ENCODE measurements at regions of chr16 and their contacts with region 1.

Region 1: GRCh38 chr16:84116720-84117493 is at the start of gene MBTPS1:
- DNase-seq: peak; percentile 91 to 99 (median 97)
- H3K4me3 ChIP-seq: peak within 1 kb of the TSS; percentile 56 to 100 (median 95)
- H3K27ac ChIP-seq: peak within 1 kb of the TSS; percentile 30 to 98 (median 92)
- H3K27me3 ChIP-seq: no peaks in the 10 kb centered on the region
- CTCF ChIP-seq: peak in 39 of 56 donors; percentile 2 to 80 (median 34)
- total RNA-seq, gene MBTPS1: 70.0 to 125 (median 95.6) TPM

Region 2: DNA sequence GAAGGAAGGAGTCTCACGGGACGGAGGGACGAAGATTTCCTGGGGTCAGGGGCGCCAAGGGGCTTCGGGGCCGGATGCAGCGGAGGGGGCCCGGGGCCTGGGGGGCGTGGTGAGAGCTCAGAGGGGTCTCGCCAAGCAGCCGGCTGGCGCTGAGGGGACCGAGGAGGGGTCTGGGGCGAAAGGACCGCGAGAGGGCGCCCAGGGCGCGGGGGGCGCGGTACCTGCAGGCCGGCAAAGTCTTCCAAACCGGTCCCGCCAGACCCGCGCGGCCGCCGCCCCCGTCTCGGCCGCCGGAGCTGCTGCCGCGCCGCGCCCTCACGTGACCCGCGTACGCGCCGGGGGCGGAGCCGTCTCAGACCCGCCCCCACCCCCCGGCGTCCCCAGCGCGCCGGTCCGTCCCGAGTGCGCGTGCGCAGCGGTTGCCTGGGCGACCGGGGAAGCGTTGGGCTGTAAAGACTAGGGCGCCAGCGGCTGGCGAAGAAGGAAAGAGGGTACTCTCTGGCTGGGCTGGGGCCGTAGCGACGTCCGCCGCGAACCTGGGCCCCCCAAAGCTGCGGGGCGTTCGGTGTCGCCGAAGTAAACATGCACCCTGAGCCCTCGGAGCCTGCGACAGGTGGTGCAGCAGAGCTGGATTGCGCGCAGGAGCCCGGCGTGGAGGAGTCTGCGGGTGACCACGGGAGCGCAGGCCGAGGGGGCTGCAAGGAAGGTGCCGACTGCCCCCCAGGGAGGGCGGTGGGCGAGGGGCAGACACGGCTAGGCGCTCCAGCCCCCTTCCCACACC is 28.1 kb after region 1 on chr16 and contains the starts of genes DNAAF1 and HSDL1:
- intact Hi-C with region 1: loop called (anchors 1 to 2 kb)
- DNase-seq: peak; percentile 88 to 97 (median 92)
- H3K4me3 ChIP-seq: peak within 1 kb of the TSS; percentile 57 to 99 (median 90)
- H3K27ac ChIP-seq: peak within 1 kb of the TSS in 46 of 59 donors; percentile 23 to 89 (median 73)
- H3K27me3 ChIP-seq: no peaks in the 10 kb centered on the region
- CTCF ChIP-seq: peak in 30 of 56 donors; percentile 11 to 54 (median 30)
- total RNA-seq, gene DNAAF1: 3.6 to 19.7 (median 8.5) TPM
- total RNA-seq, gene HSDL1: 21.5 to 75.4 (median 50.4) TPM

Region 3: DNA sequence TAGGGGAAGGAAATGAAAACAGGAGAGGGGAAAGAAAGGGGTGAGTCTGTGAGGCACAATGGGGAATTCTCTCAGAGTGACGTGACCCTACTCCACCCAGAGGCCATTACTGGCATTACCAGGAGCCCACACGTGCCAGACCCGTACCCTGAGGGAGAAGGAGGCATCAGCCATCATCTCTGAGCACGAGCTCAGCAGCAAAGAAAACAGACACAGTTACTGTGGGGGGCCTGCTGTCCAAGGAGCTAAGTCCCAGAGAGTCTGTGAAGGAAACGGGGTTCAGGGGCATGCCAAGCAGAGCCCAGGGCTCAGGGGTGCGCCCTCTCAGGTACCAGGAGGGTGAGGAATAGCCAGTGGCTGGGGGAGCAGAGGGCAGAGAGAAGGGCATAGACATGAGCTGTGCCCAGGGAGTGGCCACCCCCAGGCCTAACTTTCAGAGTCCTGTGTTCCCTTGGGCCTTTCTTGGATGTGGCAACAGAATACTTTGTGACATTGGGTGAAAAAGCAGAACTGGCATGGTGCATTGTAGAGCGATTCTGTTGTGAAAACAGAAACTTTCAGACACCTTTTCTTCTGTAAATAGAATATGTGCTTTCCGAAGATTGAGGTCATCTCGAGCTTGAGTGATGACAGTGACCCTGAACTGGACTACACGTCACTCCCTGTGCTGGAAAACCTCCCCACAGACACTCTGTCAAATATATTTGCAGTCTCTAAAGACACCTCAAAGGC is 58.6 kb after region 1 on chr16:
- intact Hi-C with region 1: loop called (anchors 2 to 10 kb)
- DNase-seq: peak in 7 of 10 donors; percentile 31 to 70 (median 57)
- H3K4me3 ChIP-seq: no peak overlapping the region
- H3K27ac ChIP-seq: peak overlapping the region in 51 of 59 donors; percentile 2 to 94 (median 87)
- H3K27me3 ChIP-seq: no peaks in the 10 kb centered on the region
- CTCF ChIP-seq: peak in 45 of 56 donors; percentile 12 to 87 (median 58)